MCF 10A (cell line): ENCODE measurements at regions of chr5 and their contacts with region 1.

Region 1: DNA sequence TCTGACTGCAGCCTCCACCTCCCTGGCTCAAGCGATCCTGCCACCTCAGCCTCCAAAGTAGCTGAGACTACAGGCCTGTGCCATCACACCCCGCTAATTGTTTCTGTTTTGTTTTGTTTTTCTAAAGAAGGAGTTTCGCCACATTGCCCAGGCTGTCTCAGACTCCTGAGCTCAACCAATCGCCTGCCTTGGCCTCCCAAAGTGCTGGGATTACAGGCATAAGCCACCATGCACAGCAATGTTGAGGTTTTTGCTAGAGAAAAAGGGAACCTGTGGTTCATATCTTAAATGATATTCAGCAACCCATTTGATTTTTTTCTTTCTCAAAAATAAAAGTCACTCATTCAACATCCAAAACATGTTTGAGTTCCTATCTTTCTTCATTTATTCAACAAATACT is 20.4 kb upstream of the DELE1 start:
- DNase-seq: no peak
- H3K4me3 Mint-ChIP-seq: no peak overlapping the region
- H3K27ac Mint-ChIP-seq: no peak overlapping the region
- H3K4me1 Mint-ChIP-seq: no peaks in the 10 kb centered on the region
- H3K27me3 Mint-ChIP-seq: no peaks in the 10 kb centered on the region
- CTCF ChIP-seq: no peak

Region 2: DNA sequence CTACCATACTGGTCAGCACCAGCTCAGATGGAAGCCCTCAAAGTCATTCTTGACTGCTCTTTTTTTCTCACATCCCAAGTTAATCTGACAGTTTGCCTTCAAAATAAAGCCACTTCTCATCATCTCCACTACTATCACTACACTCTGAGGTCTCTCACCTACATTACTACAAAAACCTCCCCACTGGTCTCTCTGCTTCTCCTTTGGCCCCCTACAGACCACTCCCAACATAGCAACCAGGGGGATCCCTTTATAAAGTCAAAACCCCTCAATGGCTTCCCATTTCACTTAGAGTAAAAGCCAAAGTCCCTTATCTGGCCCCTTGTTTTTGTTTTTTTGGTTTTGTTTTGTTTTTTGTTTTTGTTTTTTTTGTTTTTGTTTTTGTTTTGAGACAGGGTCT is 225.8 kb before region 1 on chr5:
- CTCF ChIA-PET with region 1: no interaction called
- POLR2A ChIA-PET with region 1: no interaction called
- intact Hi-C with region 1: no loop called
- DNase-seq: no peak
- H3K4me3 Mint-ChIP-seq: no peak overlapping the region
- H3K27ac Mint-ChIP-seq: no peak overlapping the region
- H3K4me1 Mint-ChIP-seq: peaks cover 14% of the 10 kb centered on the region
- H3K27me3 Mint-ChIP-seq: no peaks in the 10 kb centered on the region
- CTCF ChIP-seq: peak; percentile 20

Region 3: GRCh38 chr5:141889282-141889871 is 13.9 kb before region 1 on chr5:
- CTCF ChIA-PET with region 1: interaction called, 10 read pairs
- POLR2A ChIA-PET with region 1: interaction called, 3 read pairs
- intact Hi-C with region 1: no loop called
- DNase-seq: peak; percentile 45
- H3K4me3 Mint-ChIP-seq: no peak overlapping the region
- H3K27ac Mint-ChIP-seq: no peak overlapping the region
- H3K4me1 Mint-ChIP-seq: no peaks in the 10 kb centered on the region
- H3K27me3 Mint-ChIP-seq: peaks cover 48% of the 10 kb centered on the region
- CTCF ChIP-seq: peak; percentile 60

Region 4: DNA sequence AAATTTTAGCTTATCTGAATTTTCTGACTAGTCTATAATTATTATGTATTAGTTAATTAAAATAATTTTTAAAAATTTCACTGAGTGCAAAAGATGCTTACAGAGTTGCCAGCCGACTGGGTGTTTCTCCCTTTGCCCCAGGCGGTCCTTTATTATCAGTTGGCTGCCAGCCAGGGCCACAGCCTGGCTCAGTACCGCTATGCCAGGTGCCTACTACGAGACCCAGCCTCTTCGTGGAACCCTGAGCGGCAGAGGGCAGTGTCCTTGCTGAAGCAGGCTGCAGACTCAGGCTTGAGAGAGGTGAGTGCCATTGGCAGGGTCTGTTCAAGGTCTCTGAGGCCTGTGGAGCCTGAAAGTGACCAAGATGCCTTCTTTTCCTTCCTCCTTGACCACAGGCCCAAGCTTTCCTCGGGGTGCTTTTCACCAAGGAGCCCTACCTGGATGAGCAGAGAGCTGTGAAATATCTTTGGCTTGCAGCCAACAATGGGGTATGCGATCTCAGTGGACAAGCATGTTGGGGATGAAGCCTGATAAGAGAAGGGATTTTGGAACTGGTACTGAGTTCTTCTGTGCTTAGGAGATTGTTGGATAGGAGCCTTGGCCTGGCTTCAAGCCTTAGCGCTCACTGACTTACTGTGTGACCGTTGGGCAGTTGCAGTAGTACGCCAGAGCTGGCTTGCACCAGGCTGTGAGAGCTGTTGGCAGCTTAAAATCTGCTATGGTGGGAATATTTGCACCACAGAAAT is 31.0 kb after region 1 on chr5:
- CTCF ChIA-PET with region 1: no interaction called
- POLR2A ChIA-PET with region 1: no interaction called
- intact Hi-C with region 1: no loop called
- DNase-seq: no peak
- H3K4me3 Mint-ChIP-seq: no peak overlapping the region
- H3K27ac Mint-ChIP-seq: peak overlapping the region; percentile 55
- H3K4me1 Mint-ChIP-seq: peaks cover 19% of the 10 kb centered on the region
- H3K27me3 Mint-ChIP-seq: no peaks in the 10 kb centered on the region
- CTCF ChIP-seq: no peak